Dorsolateral prefrontal cortex (tissue), 120 donors: ENCODE measurements at regions of chr16 and their contacts with region 1.

Region 1: DNA sequence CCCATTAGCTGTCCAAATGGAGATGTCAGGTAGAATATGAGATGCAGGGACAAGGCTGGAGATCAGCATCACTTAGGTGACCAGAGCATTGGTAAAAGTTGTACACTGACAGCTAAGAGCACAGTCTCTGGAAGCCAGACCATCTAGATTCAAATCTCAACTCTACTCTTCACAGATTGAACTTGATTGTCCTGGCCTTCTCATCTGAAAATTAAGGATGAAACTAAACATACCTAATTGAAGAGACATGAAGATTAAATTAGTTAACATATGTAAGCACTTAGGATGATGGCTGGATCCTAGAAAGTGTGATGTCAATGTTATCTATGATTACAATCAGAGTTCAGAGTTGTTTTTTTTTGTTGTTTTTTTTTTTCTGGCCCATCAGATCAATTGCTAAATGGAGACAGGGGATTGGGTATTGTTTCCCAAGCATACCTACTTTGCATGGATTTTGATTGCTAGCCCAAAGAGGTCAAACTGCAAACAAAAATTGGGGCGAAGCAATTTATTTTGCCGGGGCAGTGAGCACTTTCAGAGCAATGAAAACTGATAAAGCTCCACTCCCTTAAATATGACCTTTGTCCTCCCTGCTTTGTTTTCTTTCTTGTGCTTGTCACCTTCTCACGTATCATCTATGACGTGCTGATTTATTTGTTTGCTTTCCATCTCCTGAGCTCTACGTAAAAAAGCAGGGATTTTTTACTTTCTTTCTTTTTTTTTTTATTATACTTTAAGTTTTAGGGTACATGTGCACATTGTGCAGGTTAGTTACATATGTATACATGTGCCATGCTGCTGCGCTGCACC is 217.6 kb upstream of the CPHXL start:
- DNase-seq: no peak
- H3K4me3 ChIP-seq: no peak overlapping the region
- H3K27ac ChIP-seq: peak overlapping the region in 4 of 59 donors; percentile 0 to 14 (median 8)
- H3K27me3 ChIP-seq: no peaks in the 10 kb centered on the region
- CTCF ChIP-seq: no peak

Region 2: GRCh38 chr16:75224306-75225091 is 719.4 kb before region 1 on chr16:
- intact Hi-C with region 1: no loop called
- DNase-seq: no peak
- H3K4me3 ChIP-seq: no peak overlapping the region
- H3K27ac ChIP-seq: no peak overlapping the region
- H3K27me3 ChIP-seq: peaks cover 0 to 3% (median 0%) of the 10 kb centered on the region in 45 donors
- CTCF ChIP-seq: no peak

Region 3: GRCh38 chr16:75761108-75761507 is 182.8 kb before region 1 on chr16:
- intact Hi-C with region 1: no loop called
- DNase-seq: no peak
- H3K4me3 ChIP-seq: no peak overlapping the region
- H3K27ac ChIP-seq: no peak overlapping the region
- H3K27me3 ChIP-seq: no peaks in the 10 kb centered on the region
- CTCF ChIP-seq: no peak

Region 4: GRCh38 chr16:75774197-75774596 is 169.7 kb before region 1 on chr16:
- intact Hi-C with region 1: no loop called
- DNase-seq: no peak
- H3K4me3 ChIP-seq: no peak overlapping the region
- H3K27ac ChIP-seq: no peak overlapping the region
- H3K27me3 ChIP-seq: no peaks in the 10 kb centered on the region
- CTCF ChIP-seq: no peak

Region 5: GRCh38 chr16:75860326-75861053 is 83.4 kb before region 1 on chr16:
- intact Hi-C with region 1: loop called in 1 of 2 experiments (anchors 5 kb)
- DNase-seq: peak; percentile 49 to 86 (median 81)
- H3K4me3 ChIP-seq: peak overlapping the region in 57 of 59 donors; percentile 2 to 68 (median 44)
- H3K27ac ChIP-seq: peak overlapping the region in 58 of 59 donors; percentile 29 to 90 (median 78)
- H3K27me3 ChIP-seq: no peaks in the 10 kb centered on the region
- CTCF ChIP-seq: no peak

Region 6: GRCh38 chr16:76389126-76389525 is 445.2 kb after region 1 on chr16:
- intact Hi-C with region 1: no loop called
- DNase-seq: no peak
- H3K4me3 ChIP-seq: no peak overlapping the region
- H3K27ac ChIP-seq: peak overlapping the region in 3 of 59 donors; percentile 11 to 41 (median 12)
- H3K27me3 ChIP-seq: no peaks in the 10 kb centered on the region
- CTCF ChIP-seq: no peak